HCT116 (cell line): ENCODE measurements at regions of chr1 and their contacts with region 1.

Region 1: GRCh38 chr1:201119206-201120197 is 7.3 kb upstream of the CACNA1S start:
- DNase-seq: peak; percentile 39
- ATAC-seq: peak; percentile 53
- H3K4me3 ChIP-seq: no peak overlapping the region
- H3K27ac ChIP-seq: no peak overlapping the region
- H3K4me1 ChIP-seq: peaks cover 0 to 17% of the 10 kb centered on the region in 2 experiments; a peak in 1 of 4 replicates
- H3K27me3 ChIP-seq: peaks cover 9% of the 10 kb centered on the region; the same call in 1 of the 2 replicates
- CTCF ChIP-seq: peak; percentile 64 to 90 (median 89)
- POLR2A ChIP-seq: no peak
- RAD21 ChIP-seq: peak; percentile 67

Region 2: DNA sequence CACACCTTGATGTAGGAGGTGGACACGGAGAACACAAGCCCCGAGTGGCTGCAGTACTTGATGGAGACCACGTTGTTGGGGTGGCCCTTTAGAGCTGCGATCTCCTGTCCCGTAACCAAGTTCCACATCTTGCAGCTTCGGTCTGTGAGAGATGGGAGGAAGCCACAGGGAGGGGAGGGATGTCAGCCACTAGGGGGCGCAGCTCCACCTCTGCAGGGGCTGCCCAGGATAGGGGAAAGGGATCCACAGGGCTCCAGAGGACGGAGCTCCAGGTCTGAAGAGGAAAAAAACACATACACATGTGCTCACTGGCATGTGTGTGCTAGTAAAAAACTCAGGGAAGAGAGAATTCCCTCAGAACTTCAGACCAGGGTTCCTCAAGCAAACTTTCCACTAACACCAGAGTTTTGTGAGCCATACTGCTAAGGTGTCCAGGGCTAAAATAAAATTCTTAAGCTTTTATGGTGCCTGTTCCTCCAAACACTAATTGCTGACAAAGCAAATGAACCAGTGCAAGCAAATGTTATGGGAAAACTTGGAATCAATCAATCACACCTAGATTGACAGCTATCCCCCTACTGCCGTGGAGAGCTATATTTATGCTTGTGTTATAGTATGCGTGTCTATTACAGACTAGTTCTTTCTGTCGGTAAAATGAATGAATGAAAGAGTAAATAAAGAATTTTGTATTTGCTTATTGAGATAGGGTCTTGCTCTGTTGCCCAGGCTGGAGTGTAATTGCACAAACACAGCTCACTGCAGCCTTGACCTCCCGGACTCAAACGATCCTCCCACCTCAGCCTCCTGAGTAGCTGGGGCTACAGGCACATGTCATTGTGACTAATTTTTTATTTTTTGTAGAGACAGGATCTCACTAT is 139.7 kb before region 1 on chr1:
- CTCF ChIA-PET with region 1: interaction called, 12 read pairs
- POLR2A ChIA-PET with region 1: no interaction called
- RAD21 ChIA-PET with region 1: no interaction called
- intact Hi-C with region 1: no loop called
- DNase-seq: peak; percentile 12
- ATAC-seq: peak; percentile 94
- H3K4me3 ChIP-seq: no peak overlapping the region
- H3K27ac ChIP-seq: no peak overlapping the region
- H3K4me1 ChIP-seq: no peaks in the 10 kb centered on the region
- H3K27me3 ChIP-seq: no peaks in the 10 kb centered on the region
- CTCF ChIP-seq: peak; percentile 69 to 90 (median 89); a peak in 5 of 6 replicates
- POLR2A ChIP-seq: no peak
- RAD21 ChIP-seq: peak; percentile 84